ENCODE measurements at regions of chr5 and their contacts with region 1.

Region 1: GRCh38 chr5:39080597-39081204 is 6.5 kb upstream of the RICTOR start:
- DNase-seq: peak; percentile 42 to 47
- H3K4me3 ChIP-seq: no peak overlapping the region
- H3K27ac ChIP-seq: no peak overlapping the region
- H3K4me1 ChIP-seq: no peaks in the 10 kb centered on the region
- H3K27me3 ChIP-seq: no peaks in the 10 kb centered on the region
- CTCF ChIP-seq: peak; percentile 39 to 90 (median 82)
- POLR2A ChIP-seq: no peak

Region 2: DNA sequence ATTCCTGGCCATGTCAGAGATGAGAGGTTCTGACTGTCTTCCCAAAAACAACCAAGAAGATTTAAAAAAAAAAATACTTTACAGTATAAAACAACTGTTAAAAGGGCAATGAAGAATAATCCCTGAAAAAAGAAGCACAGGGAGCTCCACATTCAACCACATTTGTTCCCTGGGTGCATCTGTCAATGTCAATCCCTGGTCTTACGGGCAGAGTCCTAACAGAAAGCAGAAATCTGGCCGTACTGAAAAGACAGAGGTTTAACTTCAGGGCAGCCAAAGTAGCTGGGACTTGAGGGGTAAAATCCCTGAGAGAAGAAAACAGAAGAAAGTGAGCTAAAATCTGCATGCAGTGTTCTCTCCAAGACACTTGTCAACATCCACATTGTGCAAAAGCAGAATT is 83.1 kb before region 1 on chr5:
- intact Hi-C with region 1: loop called (anchors 5 kb)
- DNase-seq: no peak
- H3K4me3 ChIP-seq: no peak overlapping the region
- H3K27ac ChIP-seq: no peak overlapping the region
- H3K4me1 ChIP-seq: no peaks in the 10 kb centered on the region
- H3K27me3 ChIP-seq: no peaks in the 10 kb centered on the region
- CTCF ChIP-seq: no peak
- POLR2A ChIP-seq: no peak

Region 3: DNA sequence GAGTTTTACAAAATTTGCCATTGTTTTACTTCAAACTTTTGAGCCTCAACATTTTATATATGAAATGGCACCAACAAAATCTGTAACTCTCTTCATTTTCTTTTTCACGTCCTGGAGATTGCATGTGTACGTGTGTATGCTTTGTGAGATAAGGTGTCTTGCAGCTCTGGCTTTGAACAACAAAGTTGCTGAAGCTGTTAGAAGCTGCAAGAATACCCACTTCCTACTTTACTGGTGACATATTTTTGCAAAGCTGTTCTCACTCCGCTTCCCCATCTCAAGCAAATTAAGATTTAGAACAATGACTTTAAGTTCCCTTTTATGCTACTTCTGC is 96.9 kb after region 1 on chr5:
- intact Hi-C with region 1: no loop called
- DNase-seq: no peak
- H3K4me3 ChIP-seq: no peak overlapping the region
- H3K27ac ChIP-seq: no peak overlapping the region
- H3K4me1 ChIP-seq: no peaks in the 10 kb centered on the region
- H3K27me3 ChIP-seq: no peaks in the 10 kb centered on the region
- CTCF ChIP-seq: no peak
- POLR2A ChIP-seq: no peak

Region 4: DNA sequence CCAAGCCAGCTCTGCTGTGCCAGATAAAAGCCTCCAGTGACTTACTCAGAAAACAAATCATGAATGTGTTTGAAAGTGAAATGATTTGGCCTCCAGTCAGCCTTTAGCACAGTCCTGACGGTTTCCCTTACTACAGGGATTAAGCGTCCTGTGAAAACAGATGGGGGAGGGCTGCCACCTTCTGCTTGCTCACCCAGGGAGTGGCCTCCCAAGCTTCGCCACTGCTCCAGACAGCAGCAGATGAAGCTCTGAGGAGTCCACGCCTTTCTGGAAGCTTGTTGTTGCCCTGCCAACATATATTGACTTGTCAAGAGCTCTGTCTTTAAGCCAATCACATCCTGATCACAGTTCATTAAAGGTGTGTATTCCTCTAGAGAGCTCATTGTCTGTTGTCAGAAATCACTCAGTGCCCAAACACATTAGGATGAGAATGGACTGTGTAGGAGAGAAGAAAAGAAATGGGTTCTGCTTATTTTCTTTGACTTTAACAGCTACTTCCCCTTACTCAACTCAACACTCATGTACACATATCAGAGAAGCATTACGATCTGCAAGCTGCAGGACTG is 143.6 kb after region 1 on chr5:
- intact Hi-C with region 1: no loop called
- DNase-seq: peak; percentile 26 to 30
- H3K4me3 ChIP-seq: no peak overlapping the region
- H3K27ac ChIP-seq: no peak overlapping the region
- H3K4me1 ChIP-seq: peaks cover 0 to 2% of the 10 kb centered on the region in 2 donors
- H3K27me3 ChIP-seq: no peaks in the 10 kb centered on the region
- CTCF ChIP-seq: no peak
- POLR2A ChIP-seq: no peak

Measured in thyroid gland (tissue), 4 donors.